Activated B cell treated with CpG ODN at 0.5 μM for 24 hours (primary cell): ENCODE measurements at regions of chr14 and their contacts with region 1.

Region 1: GRCh38 chr14:104078031-104078455 is 7.5 kb upstream of the ASPG start:
- DNase-seq: peak; percentile 75
- ATAC-seq: peak; percentile 99
- H3K4me3 Mint-ChIP-seq: no peak overlapping the region
- H3K27ac Mint-ChIP-seq: peak overlapping the region; percentile 55
- H3K4me1 Mint-ChIP-seq: peaks cover 9% of the 10 kb centered on the region
- H3K27me3 Mint-ChIP-seq: peaks cover 20% of the 10 kb centered on the region
- CTCF ChIP-seq: peak; percentile 84

Region 2: DNA sequence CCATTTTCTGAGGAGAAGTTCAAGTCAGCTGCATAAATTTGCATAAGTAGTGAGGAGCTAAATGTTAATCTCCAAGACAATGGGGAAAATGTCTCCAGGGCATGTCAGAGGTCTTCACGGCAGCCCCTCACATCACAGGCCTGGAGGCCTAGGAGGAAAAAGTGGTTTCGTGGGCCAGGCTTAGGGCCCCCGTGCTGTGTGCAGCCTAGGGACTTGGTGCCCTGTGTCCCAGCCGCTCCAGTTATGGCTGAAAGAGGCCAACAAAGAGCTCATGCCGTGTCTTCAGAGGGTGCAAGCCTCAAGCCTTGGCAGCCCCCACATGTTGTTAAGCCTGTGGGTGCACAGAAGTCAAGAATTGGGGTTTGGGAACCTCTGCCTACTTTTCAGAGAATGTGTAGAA is 93.8 kb before region 1 on chr14:
- CTCF ChIA-PET with region 1: no interaction called
- POLR2A ChIA-PET with region 1: no interaction called
- intact Hi-C with region 1: no loop called
- DNase-seq: no peak
- ATAC-seq: no peak
- H3K4me3 Mint-ChIP-seq: no peak overlapping the region
- H3K27ac Mint-ChIP-seq: no peak overlapping the region
- H3K4me1 Mint-ChIP-seq: no peaks in the 10 kb centered on the region
- H3K27me3 Mint-ChIP-seq: peaks cover 7% of the 10 kb centered on the region
- CTCF ChIP-seq: no peak

Region 3: GRCh38 chr14:104130974-104131651 is 53.1 kb after region 1 on chr14:
- CTCF ChIA-PET with region 1: interaction called, 5 read pairs
- POLR2A ChIA-PET with region 1: no interaction called
- intact Hi-C with region 1: loop called (anchors 1 kb)
- DNase-seq: no peak
- ATAC-seq: no peak
- H3K4me3 Mint-ChIP-seq: no peak overlapping the region
- H3K27ac Mint-ChIP-seq: no peak overlapping the region
- H3K4me1 Mint-ChIP-seq: peaks cover 6% of the 10 kb centered on the region
- H3K27me3 Mint-ChIP-seq: peaks cover 38% of the 10 kb centered on the region
- CTCF ChIP-seq: no peak

Region 4: DNA sequence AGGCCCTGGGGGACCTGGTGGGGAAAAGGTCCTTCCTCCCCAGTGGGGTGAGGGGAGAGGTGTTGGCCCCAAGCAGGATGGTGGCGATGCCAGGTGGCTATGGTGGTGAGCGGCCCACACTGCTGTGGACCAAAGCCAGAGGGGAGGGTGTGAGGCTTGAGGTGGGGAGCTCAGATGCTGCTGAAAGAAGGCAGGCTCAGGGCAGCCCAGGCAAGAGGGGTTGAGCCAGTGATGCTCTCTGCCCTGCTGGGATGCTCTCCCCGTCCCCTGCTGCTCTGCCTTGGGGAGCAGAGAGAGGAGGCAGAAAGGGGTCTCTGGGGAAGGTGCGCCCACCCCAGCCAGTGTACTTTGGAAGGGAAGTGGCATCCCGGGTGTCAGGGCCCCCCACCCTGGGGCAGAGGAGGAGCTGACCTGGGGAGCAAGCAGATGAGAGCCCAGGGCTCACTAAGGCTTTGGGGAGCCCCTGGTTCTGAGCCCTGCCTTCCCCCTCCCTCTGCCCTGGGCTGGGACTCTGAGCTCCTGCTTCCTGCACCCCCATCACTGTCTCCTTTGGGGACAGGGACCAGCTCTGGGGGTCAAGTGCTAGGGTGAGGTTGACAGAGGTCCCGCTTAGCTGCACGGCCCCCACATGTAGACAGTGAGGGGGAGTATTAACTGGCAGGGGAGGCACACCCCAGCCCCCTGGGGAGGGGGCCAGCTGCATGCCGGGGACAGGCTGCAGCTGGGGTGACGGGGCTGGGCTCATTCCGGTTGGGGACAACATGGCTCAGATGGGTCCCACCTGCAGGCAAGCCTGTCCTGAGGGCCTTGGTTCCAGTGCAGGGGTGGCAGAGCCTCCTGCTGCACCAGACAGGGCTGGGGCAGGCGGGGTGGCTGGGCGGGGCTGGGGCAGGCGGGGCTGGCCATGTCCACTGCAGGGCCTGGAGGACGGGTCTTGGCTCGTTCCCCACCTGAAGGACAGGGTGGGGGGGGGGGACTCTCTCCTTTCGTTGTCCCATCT is 184.8 kb after region 1 on chr14:
- CTCF ChIA-PET with region 1: no interaction called
- POLR2A ChIA-PET with region 1: no interaction called
- intact Hi-C with region 1: no loop called
- DNase-seq: peak; percentile 10
- ATAC-seq: no peak
- H3K4me3 Mint-ChIP-seq: no peak overlapping the region
- H3K27ac Mint-ChIP-seq: no peak overlapping the region
- H3K4me1 Mint-ChIP-seq: no peaks in the 10 kb centered on the region
- H3K27me3 Mint-ChIP-seq: peaks cover 13% of the 10 kb centered on the region
- CTCF ChIP-seq: no peak

Region 5: GRCh38 chr14:104563742-104564615 is 485.9 kb after region 1 on chr14:
- CTCF ChIA-PET with region 1: interaction called, 19 read pairs
- POLR2A ChIA-PET with region 1: no interaction called
- intact Hi-C with region 1: loop called (anchors 1 kb)
- DNase-seq: peak; percentile 38
- ATAC-seq: peak; percentile 83
- H3K4me3 Mint-ChIP-seq: no peak overlapping the region
- H3K27ac Mint-ChIP-seq: no peak overlapping the region
- H3K4me1 Mint-ChIP-seq: peaks cover 5% of the 10 kb centered on the region
- H3K27me3 Mint-ChIP-seq: peaks cover 29% of the 10 kb centered on the region
- CTCF ChIP-seq: no peak

Region 6: GRCh38 chr14:104639889-104640548 is 562.0 kb after region 1 on chr14:
- CTCF ChIA-PET with region 1: interaction called, 10 read pairs
- POLR2A ChIA-PET with region 1: no interaction called
- intact Hi-C with region 1: no loop called
- DNase-seq: peak; percentile 61
- ATAC-seq: peak; percentile 91
- H3K4me3 Mint-ChIP-seq: no peak overlapping the region
- H3K27ac Mint-ChIP-seq: no peak overlapping the region
- H3K4me1 Mint-ChIP-seq: peaks cover 2% of the 10 kb centered on the region
- H3K27me3 Mint-ChIP-seq: peaks cover 3% of the 10 kb centered on the region
- CTCF ChIP-seq: no peak